ENCODE measurements at regions of chr16 and their contacts with region 1.

Region 1: DNA sequence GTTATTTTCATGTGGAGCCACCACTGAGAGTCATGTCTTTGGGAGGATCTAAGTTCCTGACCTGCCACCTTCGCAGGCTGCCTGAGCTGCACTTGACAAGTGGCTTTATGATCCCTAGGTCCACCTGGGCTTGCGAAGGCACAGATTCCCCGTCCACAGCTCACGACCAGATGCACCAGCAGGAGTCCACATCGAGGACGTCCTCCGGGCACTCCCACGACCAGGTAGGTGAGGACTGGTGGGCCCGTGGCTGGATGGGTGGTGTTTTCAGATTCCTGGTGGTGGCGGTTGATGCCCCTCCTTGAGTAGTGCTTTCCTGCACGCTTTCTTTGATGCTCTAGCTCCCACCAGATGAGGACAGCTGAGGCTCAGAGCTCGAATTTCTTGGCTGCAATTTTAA is 14.8 kb downstream of the FAM234A start:
- DNase-seq: no peak
- H3K4me3 ChIP-seq: no peak overlapping the region
- H3K27ac ChIP-seq: no peak overlapping the region
- H3K4me1 ChIP-seq: no peaks in the 10 kb centered on the region
- H3K27me3 ChIP-seq: no peaks in the 10 kb centered on the region
- CTCF ChIP-seq: no peak

Region 2: GRCh38 chr16:143456-143855 is 106.0 kb before region 1 on chr16:
- CTCF ChIA-PET with region 1: no interaction called
- dilution Hi-C with region 1: loop called (anchors 5 kb)
- in situ Hi-C with region 1: no loop called
- intact Hi-C with region 1: no loop called
- DNase-seq: peak; percentile 21
- H3K4me3 ChIP-seq: no peak overlapping the region
- H3K27ac ChIP-seq: no peak overlapping the region
- H3K4me1 ChIP-seq: peaks cover 13% of the 10 kb centered on the region
- H3K27me3 ChIP-seq: no peaks in the 10 kb centered on the region
- CTCF ChIP-seq: no peak

Region 3: GRCh38 chr16:180938-181667 is 68.3 kb before region 1 on chr16:
- CTCF ChIA-PET with region 1: no interaction called
- dilution Hi-C with region 1: no loop called
- in situ Hi-C with region 1: no loop called
- intact Hi-C with region 1: no loop called
- DNase-seq: peak; percentile 57
- H3K4me3 ChIP-seq: peak overlapping the region in 2 of 3 experiments; percentile 20 to 33
- H3K27ac ChIP-seq: no peak overlapping the region
- H3K4me1 ChIP-seq: peaks cover 9% of the 10 kb centered on the region
- H3K27me3 ChIP-seq: peaks cover 7% of the 10 kb centered on the region
- CTCF ChIP-seq: peak; percentile 82 to 95

Region 4: DNA sequence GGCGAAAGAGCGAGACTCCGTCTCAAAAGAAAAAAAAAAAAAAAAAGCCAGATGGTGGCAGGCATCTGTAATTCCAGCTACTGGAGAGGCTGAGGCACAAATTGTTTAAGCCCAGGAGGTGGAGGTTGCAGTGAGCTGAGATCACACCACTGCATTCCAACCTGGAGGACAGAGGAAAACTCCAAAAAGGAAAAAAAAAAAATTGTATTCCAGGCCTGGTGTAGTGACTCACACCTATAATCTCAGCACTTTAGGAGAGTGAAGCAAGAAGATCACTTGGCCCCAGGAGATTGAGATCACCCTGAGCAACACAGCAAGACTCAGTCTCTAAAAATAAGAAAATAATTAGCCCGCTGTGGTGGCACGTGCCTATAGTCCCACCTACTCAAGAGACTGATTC is 49.0 kb before region 1 on chr16:
- CTCF ChIA-PET with region 1: no interaction called
- dilution Hi-C with region 1: loop called (anchors 5 kb)
- in situ Hi-C with region 1: no loop called
- intact Hi-C with region 1: no loop called
- DNase-seq: peak; percentile 44
- H3K4me3 ChIP-seq: no peak overlapping the region
- H3K27ac ChIP-seq: no peak overlapping the region
- H3K4me1 ChIP-seq: no peaks in the 10 kb centered on the region
- H3K27me3 ChIP-seq: no peaks in the 10 kb centered on the region
- CTCF ChIP-seq: no peak

Region 5: GRCh38 chr16:297832-298417 is 48.5 kb after region 1 on chr16:
- CTCF ChIA-PET with region 1: no interaction called
- dilution Hi-C with region 1: loop called (anchors 5 kb)
- in situ Hi-C with region 1: no loop called
- intact Hi-C with region 1: no loop called
- DNase-seq: no peak
- H3K4me3 ChIP-seq: no peak overlapping the region
- H3K27ac ChIP-seq: no peak overlapping the region
- H3K4me1 ChIP-seq: no peaks in the 10 kb centered on the region
- H3K27me3 ChIP-seq: no peaks in the 10 kb centered on the region
- CTCF ChIP-seq: no peak

Region 6: DNA sequence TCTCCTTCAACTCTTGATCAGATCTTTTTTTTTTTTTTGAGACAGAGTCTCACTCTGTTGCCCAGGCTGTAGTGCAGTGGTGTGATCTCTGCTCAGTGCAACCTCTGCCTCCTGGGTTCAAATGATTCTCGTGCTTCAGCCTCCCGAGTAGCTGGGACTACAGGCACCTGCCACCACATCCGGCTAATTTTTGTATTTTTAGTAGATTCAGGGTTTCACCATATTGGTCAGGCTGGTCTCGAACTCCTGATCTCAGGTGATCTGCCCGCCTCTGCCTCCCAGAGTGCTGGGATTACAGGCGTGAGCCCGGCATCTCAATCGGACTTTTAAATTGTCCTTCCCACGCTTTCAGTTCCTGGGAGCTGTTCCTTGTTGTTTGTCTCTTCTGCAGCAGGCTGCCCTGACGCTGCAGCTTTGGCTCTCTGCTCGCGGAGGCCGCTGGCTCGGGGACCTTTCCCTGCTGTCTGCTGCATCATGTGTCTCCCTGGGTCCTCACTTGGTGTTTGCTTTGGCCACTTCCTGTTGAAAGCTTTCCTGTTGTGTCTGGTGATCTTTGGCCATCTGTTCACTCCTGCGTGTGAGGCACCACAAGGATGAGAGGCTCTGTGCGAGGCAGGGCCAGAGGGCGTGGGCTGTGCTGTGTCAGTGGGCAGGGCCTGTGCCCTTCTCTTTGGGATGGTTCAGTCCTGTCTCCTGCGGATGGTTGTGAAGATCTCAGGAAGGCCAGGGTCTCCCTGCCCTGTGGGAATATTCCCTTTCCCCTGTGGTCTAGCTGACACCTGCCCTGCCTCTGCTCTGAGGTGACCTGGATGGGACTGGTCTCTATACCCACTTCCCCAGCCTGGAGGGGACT is 259.7 kb after region 1 on chr16:
- CTCF ChIA-PET with region 1: no interaction called
- dilution Hi-C with region 1: no loop called
- in situ Hi-C with region 1: no loop called
- intact Hi-C with region 1: no loop called
- DNase-seq: no peak
- H3K4me3 ChIP-seq: no peak overlapping the region
- H3K27ac ChIP-seq: no peak overlapping the region
- H3K4me1 ChIP-seq: no peaks in the 10 kb centered on the region
- H3K27me3 ChIP-seq: no peaks in the 10 kb centered on the region
- CTCF ChIP-seq: no peak

Measured in mammary epithelial cell (primary cell).